Tibial artery (tissue), 4 donors: ENCODE measurements at regions of chr12 and their contacts with region 1.

Region 1: GRCh38 chr12:95815635-95816212 is 25.2 kb upstream of the NTN4 start:
- DNase-seq: no peak
- H3K4me3 ChIP-seq: no peak overlapping the region
- H3K27ac ChIP-seq: no peak overlapping the region
- H3K4me1 ChIP-seq: no peaks in the 10 kb centered on the region
- H3K27me3 ChIP-seq: no peaks in the 10 kb centered on the region
- CTCF ChIP-seq: peak; percentile 72 to 84

Region 2: GRCh38 chr12:95582230-95583058 is 233.3 kb before region 1 on chr12:
- intact Hi-C with region 1: loop called (anchors 10 kb)
- DNase-seq: no peak
- H3K4me3 ChIP-seq: no peak overlapping the region
- H3K27ac ChIP-seq: no peak overlapping the region
- H3K4me1 ChIP-seq: no peaks in the 10 kb centered on the region
- H3K27me3 ChIP-seq: no peaks in the 10 kb centered on the region
- CTCF ChIP-seq: peak; percentile 49 to 60

Region 3: DNA sequence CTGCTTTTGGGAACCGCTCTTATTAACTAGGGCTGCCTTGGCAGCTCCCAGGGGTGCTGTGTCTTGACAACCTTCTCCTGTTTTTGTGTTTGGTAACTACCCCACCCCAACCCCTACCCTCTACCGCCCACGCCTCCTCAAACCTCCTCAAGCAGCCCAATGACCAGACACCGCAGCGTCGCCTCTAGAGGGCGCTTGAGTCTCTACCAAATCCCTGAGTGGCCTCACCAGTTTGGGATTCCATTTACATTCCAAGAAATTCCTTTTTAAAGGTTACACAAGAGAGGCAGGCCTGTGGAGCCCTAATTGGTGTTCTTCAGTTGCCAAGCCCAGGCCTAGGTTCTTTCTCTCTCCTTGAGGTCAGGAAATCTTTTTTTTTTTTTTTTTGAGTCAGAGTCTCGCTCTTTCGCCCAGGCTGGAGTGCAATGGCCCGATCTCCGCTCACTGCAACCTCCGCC is 192.1 kb before region 1 on chr12:
- intact Hi-C with region 1: loop called (anchors 1 kb)
- DNase-seq: peak; percentile 51 to 82
- H3K4me3 ChIP-seq: no peak overlapping the region
- H3K27ac ChIP-seq: peak overlapping the region in 1 of 2 donors; percentile 28
- H3K4me1 ChIP-seq: peaks cover 0 to 14% (median 5%) of the 10 kb centered on the region in 4 donors
- H3K27me3 ChIP-seq: no peaks in the 10 kb centered on the region
- CTCF ChIP-seq: peak; percentile 59 to 71

Region 4: DNA sequence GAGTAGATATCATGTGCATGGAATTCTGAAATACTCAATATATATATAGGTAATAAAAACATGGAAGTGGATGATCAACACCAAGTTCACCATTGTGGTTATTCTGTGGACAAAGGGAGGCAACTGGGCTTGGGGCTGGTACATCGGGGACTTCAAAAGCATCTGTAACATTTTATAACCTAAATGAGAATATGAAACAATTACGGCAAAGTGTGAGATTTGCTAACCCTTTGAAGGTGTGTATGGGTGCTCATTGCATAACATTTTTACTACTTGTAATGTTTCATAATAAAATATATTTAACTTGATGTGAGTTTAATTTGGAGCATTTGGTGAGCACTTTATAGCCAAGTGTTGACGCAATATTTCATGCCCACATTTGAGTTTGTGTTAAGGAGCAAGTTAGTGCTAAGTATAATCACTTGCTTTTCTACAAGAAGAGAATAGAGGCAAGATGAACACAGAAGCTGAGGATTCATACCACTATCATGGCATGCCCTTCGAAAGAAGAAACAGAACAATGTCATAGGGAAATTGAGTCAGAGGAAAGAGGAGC is 134.4 kb before region 1 on chr12:
- intact Hi-C with region 1: no loop called
- DNase-seq: no peak
- H3K4me3 ChIP-seq: no peak overlapping the region
- H3K27ac ChIP-seq: no peak overlapping the region
- H3K4me1 ChIP-seq: no peaks in the 10 kb centered on the region
- H3K27me3 ChIP-seq: no peaks in the 10 kb centered on the region
- CTCF ChIP-seq: no peak